Ovary (tissue), 10 donors: ENCODE measurements at regions of chr14 and their contacts with region 1.

Region 1: GRCh38 chr14:20413045-20413799 is at the start of gene TEP1:
- DNase-seq: peak; percentile 81 to 89 (median 85)
- H3K4me3 ChIP-seq: peak within 1 kb of the TSS; percentile 68
- H3K27ac ChIP-seq: peak within 1 kb of the TSS; percentile 85 to 92
- H3K4me1 ChIP-seq: no peaks in the 10 kb centered on the region
- H3K27me3 ChIP-seq: no peaks in the 10 kb centered on the region
- CTCF ChIP-seq: no peak
- EP300 ChIP-seq: no peak
- POLR2A ChIP-seq: peak; percentile 68
- total RNA-seq, gene TEP1: 8.2 to 24.0 (median 18.2) TPM

Region 2: DNA sequence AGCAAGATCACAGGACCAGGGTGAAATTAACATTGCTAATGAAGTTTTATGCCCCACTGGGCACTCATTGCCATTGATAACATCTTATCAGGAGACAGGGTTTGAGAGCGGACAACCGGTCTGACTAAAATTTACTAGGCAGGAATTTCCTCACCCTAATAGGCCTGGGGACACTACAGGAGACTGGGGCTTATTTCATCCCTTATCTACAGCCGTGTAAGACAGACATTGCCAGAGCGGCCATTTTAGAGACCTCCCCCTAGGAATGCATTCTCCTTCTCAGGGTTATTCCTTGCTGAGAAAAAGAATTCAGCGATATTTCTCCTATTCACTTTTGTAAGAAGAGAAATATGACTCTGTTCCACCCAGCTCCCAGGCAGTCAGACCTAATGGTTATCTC is 294.4 kb before region 1 on chr14:
- intact Hi-C with region 1: no loop called
- DNase-seq: no peak
- H3K4me3 ChIP-seq: no peak overlapping the region
- H3K27ac ChIP-seq: no peak overlapping the region
- H3K4me1 ChIP-seq: no peaks in the 10 kb centered on the region
- H3K27me3 ChIP-seq: no peaks in the 10 kb centered on the region
- CTCF ChIP-seq: no peak
- EP300 ChIP-seq: no peak
- POLR2A ChIP-seq: no peak

Region 3: GRCh38 chr14:20461274-20462001 is 48.2 kb after region 1 on chr14 and contains the start of gene PIP4P1:
- intact Hi-C with region 1: loop called in 1 of 4 experiments (anchors 5 kb)
- DNase-seq: peak; percentile 95 to 99 (median 97)
- H3K4me3 ChIP-seq: peak within 1 kb of the TSS; percentile 92
- H3K27ac ChIP-seq: peak within 1 kb of the TSS; percentile 68 to 74
- H3K4me1 ChIP-seq: peaks cover 3% of the 10 kb centered on the region
- H3K27me3 ChIP-seq: no peaks in the 10 kb centered on the region
- CTCF ChIP-seq: no peak
- EP300 ChIP-seq: peak; percentile 94
- POLR2A ChIP-seq: peak; percentile 85
- total RNA-seq, gene PIP4P1: 11.8 to 32.0 (median 24.2) TPM